Activated CD8-positive, alpha-beta T cell treated with anti-CD3 and anti-CD28 coated beads for 36 hours (primary cell): ENCODE measurements at regions of chr19 and their contacts with region 1.

Region 1: GRCh38 chr19:40165362-40165937 is 25.8 kb upstream of the MAP3K10 start:
- DNase-seq: peak; percentile 83
- ATAC-seq: peak; percentile 95
- H3K4me3 Mint-ChIP-seq: no peak overlapping the region
- H3K27ac Mint-ChIP-seq: no peak overlapping the region
- H3K4me1 Mint-ChIP-seq: peaks cover 14% of the 10 kb centered on the region
- H3K27me3 Mint-ChIP-seq: no peaks in the 10 kb centered on the region
- CTCF ChIP-seq: peak; percentile 79

Region 2: DNA sequence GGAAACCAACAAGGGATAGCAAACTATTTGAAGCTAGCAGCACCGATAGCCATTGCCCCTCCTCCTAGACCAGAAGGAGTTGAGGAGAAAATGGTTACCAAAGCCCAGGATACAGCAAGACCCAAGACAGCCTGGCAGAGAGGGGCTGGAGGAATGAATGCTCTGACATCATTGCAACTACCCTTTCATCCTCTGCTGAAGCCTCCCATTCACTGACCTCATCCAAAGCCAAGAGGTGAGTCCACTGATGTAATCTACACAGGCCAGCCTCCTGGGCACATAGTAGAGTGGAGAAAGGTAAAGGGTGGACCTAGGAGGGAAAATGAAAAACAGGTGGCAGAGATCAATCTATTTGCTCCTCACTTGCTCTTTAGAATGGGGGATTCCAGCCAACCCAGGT is 32.0 kb before region 1 on chr19:
- CTCF ChIA-PET with region 1: interaction called, 13 read pairs
- POLR2A ChIA-PET with region 1: no interaction called
- intact Hi-C with region 1: no loop called
- DNase-seq: no peak
- ATAC-seq: no peak
- H3K4me3 Mint-ChIP-seq: no peak overlapping the region
- H3K27ac Mint-ChIP-seq: no peak overlapping the region
- H3K4me1 Mint-ChIP-seq: no peaks in the 10 kb centered on the region
- H3K27me3 Mint-ChIP-seq: peaks cover 2% of the 10 kb centered on the region
- CTCF ChIP-seq: no peak

Region 3: DNA sequence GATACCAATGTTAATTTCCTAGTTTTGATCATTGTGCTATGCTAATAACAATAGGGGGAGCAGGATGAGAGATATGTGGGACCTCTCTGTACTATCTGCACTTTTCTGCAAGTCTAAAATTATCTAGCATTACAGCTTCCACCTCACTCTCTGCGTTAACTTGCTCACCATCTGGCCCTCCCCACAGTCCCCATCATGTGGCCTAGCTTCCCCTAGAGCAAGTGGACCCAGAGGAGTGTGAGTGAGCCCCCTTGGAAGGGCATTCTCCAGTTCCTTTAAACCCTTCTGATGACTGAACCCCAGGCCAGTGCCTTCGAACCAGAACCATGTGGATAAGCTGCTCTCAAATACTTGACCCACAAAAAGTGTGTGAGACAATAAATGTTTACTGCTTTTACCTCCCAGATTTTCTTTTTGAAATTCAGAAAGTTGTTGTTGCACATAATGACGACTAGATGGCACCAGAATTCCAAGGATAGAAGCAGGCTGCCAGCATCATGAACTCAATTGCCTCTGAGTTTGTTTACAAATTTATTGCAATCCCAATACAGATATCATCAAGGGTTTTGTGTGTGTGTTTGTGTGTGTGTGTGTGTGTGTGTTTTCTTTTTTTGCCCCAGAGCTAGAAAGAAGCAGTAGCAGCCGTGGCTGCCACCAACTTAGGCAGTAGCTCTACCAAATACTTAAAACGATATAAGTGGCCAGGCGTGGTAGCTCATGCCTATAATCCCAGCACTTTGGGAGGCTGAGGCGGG is 25.7 kb before region 1 on chr19:
- CTCF ChIA-PET with region 1: interaction called, 45 read pairs
- POLR2A ChIA-PET with region 1: interaction called, 4 read pairs
- intact Hi-C with region 1: no loop called
- DNase-seq: peak; percentile 12
- ATAC-seq: no peak
- H3K4me3 Mint-ChIP-seq: no peak overlapping the region
- H3K27ac Mint-ChIP-seq: no peak overlapping the region
- H3K4me1 Mint-ChIP-seq: peaks cover 16% of the 10 kb centered on the region
- H3K27me3 Mint-ChIP-seq: no peaks in the 10 kb centered on the region
- CTCF ChIP-seq: peak; percentile 89

Region 4: DNA sequence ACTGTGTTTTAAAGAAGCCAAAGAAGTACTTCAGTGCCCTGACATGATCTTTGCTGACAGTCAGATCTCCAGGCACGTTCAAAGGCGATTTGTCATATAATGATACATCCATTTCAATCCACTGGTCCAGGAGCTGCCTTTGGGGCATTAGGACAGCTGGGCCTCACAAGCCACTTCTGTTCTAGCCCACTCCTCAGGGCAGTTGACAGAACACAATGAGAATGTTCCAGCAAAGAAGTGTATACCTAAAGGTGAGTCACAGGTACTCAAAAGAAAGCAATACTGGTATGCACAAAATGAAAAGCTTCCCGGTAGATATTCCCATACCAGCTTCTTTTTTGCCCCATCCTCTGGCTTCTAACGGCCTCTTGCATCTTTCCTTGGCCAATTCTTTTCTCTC is 13.3 kb after region 1 on chr19:
- CTCF ChIA-PET with region 1: interaction called, 25 read pairs
- POLR2A ChIA-PET with region 1: no interaction called
- intact Hi-C with region 1: no loop called
- DNase-seq: no peak
- ATAC-seq: no peak
- H3K4me3 Mint-ChIP-seq: no peak overlapping the region
- H3K27ac Mint-ChIP-seq: no peak overlapping the region
- H3K4me1 Mint-ChIP-seq: no peaks in the 10 kb centered on the region
- H3K27me3 Mint-ChIP-seq: peaks cover 5% of the 10 kb centered on the region
- CTCF ChIP-seq: no peak

Region 5: GRCh38 chr19:40190891-40191835 is 25.7 kb after region 1 on chr19 and contains the start of gene MAP3K10:
- CTCF ChIA-PET with region 1: interaction called, 12 read pairs
- POLR2A ChIA-PET with region 1: no interaction called
- intact Hi-C with region 1: no loop called
- DNase-seq: peak; percentile 91
- ATAC-seq: peak; percentile 89
- H3K4me3 Mint-ChIP-seq: peak within 1 kb of the TSS; percentile 84
- H3K27ac Mint-ChIP-seq: peak within 1 kb of the TSS; percentile 95
- H3K4me1 Mint-ChIP-seq: peaks cover 28% of the 10 kb centered on the region
- H3K27me3 Mint-ChIP-seq: no peaks in the 10 kb centered on the region
- CTCF ChIP-seq: no peak
- total RNA-seq, gene MAP3K10: 11.3 to 12.6 TPM